ENCODE measurements at regions of chr3 and their contacts with region 1.

Region 1: DNA sequence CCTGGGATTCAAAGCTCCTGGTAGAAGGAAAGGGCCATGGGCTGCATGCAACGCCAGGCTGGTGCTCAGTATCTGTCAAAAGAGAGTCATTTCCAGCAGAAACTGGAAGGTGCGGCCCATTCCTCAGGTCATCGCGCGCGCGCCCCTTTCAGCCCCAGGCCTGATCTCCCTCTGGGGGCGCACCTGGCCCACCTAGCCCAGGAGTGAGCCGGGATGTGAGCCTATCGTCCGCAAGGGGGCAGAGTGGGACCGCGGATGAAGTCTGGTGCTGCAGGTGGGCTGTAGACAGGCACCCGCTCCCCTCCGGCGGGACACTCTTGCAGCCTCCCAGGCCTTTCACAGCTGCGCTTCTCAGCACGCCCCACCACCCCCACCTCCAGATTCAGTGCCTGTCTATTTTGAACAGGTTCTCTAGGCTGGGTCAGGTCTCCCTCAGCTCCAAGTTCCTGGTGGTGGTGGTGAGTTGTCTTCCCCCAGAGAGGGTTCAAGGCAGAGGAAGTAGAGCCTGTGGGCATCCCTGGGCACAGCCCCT is 5.8 kb upstream of the RPL29 start:
- DNase-seq: peak; percentile 90
- H3K4me3 Mint-ChIP-seq: no peak overlapping the region
- H3K27ac Mint-ChIP-seq: no peak overlapping the region
- H3K4me1 Mint-ChIP-seq: peaks cover 14% of the 10 kb centered on the region
- H3K27me3 Mint-ChIP-seq: no peaks in the 10 kb centered on the region

Region 2: DNA sequence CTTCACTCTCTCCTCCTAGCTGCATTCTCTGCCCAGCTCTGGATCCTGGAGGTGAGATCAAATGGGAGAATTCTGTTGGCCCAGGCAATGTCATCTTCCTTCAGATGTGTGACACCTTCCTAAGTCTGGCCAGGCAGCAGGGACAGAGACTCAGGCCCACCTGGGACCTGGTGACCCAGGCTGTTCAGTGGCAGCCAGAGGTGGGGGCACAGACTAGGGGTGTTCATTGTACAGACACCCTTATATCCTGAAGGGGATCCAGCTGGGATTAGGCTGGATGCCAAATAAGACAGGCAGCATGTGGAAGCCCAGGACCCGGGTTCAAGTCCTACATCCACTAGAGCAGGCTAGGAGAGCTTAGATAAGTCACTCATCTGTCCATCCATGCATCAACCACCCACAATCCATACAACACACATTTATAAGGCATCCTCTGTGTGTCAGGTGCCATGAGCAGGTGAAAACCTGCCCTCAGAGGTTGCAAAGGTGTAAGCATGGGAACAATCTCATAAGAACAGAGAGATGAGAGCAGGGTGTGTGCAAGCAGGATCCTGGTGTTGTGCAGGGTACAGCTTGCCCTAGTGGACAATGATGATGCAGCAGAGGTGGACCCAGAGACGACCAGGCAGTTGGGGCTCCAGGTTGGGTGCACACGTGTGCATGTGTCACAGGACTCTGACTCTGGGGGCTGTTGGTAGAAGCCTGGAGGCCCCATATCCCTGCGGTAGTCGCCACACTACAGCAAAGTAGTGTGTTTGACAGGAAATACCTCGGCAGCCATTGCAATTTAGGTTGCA is 12.5 kb after region 1 on chr3:
- CTCF ChIA-PET with region 1: interaction called, 11 read pairs
- POLR2A ChIA-PET with region 1: interaction called, 3 read pairs
- intact Hi-C with region 1: no loop called
- DNase-seq: no peak
- H3K4me3 Mint-ChIP-seq: no peak overlapping the region
- H3K27ac Mint-ChIP-seq: no peak overlapping the region
- H3K4me1 Mint-ChIP-seq: no peaks in the 10 kb centered on the region
- H3K27me3 Mint-ChIP-seq: no peaks in the 10 kb centered on the region

Region 3: GRCh38 chr3:52123106-52123725 is 121.7 kb after region 1 on chr3:
- CTCF ChIA-PET with region 1: interaction called, 101 read pairs
- POLR2A ChIA-PET with region 1: no interaction called
- intact Hi-C with region 1: loop called (anchors 1 kb)
- DNase-seq: peak; percentile 78
- H3K4me3 Mint-ChIP-seq: no peak overlapping the region
- H3K27ac Mint-ChIP-seq: no peak overlapping the region
- H3K4me1 Mint-ChIP-seq: peaks cover 4% of the 10 kb centered on the region
- H3K27me3 Mint-ChIP-seq: no peaks in the 10 kb centered on the region

Region 4: GRCh38 chr3:52136513-52136912 is 135.0 kb after region 1 on chr3:
- CTCF ChIA-PET with region 1: interaction called, 14 read pairs
- POLR2A ChIA-PET with region 1: no interaction called
- intact Hi-C with region 1: no loop called
- DNase-seq: no peak
- H3K4me3 Mint-ChIP-seq: no peak overlapping the region
- H3K27ac Mint-ChIP-seq: no peak overlapping the region
- H3K4me1 Mint-ChIP-seq: no peaks in the 10 kb centered on the region
- H3K27me3 Mint-ChIP-seq: no peaks in the 10 kb centered on the region

Region 5: GRCh38 chr3:52144034-52144795 is 142.7 kb after region 1 on chr3:
- CTCF ChIA-PET with region 1: interaction called, 68 read pairs
- POLR2A ChIA-PET with region 1: no interaction called
- intact Hi-C with region 1: loop called (anchors 1 kb)
- DNase-seq: peak; percentile 87
- H3K4me3 Mint-ChIP-seq: no peak overlapping the region
- H3K27ac Mint-ChIP-seq: no peak overlapping the region
- H3K4me1 Mint-ChIP-seq: peaks cover 6% of the 10 kb centered on the region
- H3K27me3 Mint-ChIP-seq: no peaks in the 10 kb centered on the region

Region 6: DNA sequence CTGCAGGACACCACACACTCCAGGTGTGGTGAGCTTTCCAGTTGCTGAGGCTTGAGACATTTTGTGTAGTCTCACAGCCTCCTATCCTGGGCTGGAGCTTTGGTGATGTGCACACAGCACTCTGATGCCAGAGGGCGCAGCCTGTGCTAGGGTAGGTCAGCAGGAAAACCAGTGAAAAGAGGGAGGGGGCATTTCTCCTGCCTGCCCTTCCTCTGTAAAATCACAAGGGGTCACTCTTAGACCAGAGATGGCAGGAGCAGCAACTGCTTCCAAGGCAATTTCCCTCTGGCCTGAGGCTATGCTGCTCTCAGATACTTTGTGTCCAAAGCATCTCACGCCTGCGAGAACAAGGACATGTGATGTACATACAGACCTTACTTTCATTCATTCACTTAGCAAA is 849.8 kb after region 1 on chr3:
- CTCF ChIA-PET with region 1: no interaction called
- POLR2A ChIA-PET with region 1: no interaction called
- intact Hi-C with region 1: no loop called
- DNase-seq: peak; percentile 51
- H3K4me3 Mint-ChIP-seq: no peak overlapping the region
- H3K27ac Mint-ChIP-seq: no peak overlapping the region
- H3K4me1 Mint-ChIP-seq: no peaks in the 10 kb centered on the region
- H3K27me3 Mint-ChIP-seq: no peaks in the 10 kb centered on the region

Measured in activated CD4-positive, alpha-beta memory T cell treated with anti-CD3 and anti-CD28 coated beads for 36 hours (primary cell).